Psoas muscle (tissue), 8 donors: ENCODE measurements at regions of chr22 and their contacts with region 1.

Region 1: DNA sequence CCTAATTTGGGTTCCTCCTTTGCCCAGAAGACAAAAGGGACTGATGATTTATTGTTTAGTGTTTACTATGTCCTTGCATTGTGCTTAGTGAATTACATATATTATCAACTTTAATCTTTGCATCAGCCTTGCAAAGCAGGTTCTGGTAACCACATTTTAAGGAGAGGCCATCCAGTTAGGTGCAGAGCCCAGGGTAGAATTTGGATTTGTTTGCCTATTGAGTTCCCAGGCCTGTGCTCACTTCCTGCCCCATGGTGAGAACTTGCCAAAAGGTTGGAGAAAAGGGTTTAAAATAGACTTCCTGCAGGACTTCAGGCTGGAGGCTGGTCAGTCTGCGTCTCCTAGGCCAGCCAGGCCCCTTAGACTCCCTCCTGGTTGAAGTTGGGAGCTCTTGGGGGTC is 72.0 kb downstream of the ATXN10 start:
- DNase-seq: no peak
- ATAC-seq: peak; percentile 42 to 71 (median 56)
- H3K4me3 ChIP-seq: no peak overlapping the region
- H3K27ac ChIP-seq: peak overlapping the region; percentile 74
- H3K4me1 ChIP-seq: peaks cover 19% of the 10 kb centered on the region
- H3K27me3 ChIP-seq: no peaks in the 10 kb centered on the region
- CTCF ChIP-seq: no peak

Region 2: GRCh38 chr22:45709060-45709739 is 34.5 kb before region 1 on chr22:
- intact Hi-C with region 1: no loop called
- DNase-seq: peak in 1 of 2 donors; percentile 23
- ATAC-seq: peak in 3 of 4 donors; percentile 28 to 50 (median 34)
- H3K4me3 ChIP-seq: no peak overlapping the region
- H3K27ac ChIP-seq: peak overlapping the region; percentile 57
- H3K4me1 ChIP-seq: peaks cover 27% of the 10 kb centered on the region
- H3K27me3 ChIP-seq: no peaks in the 10 kb centered on the region
- CTCF ChIP-seq: no peak

Region 3: GRCh38 chr22:45785458-45785857 is 41.8 kb after region 1 on chr22:
- intact Hi-C with region 1: loop called in 1 of 2 experiments (anchors 2 kb)
- DNase-seq: no peak
- ATAC-seq: peak; percentile 67 to 77 (median 74)
- H3K4me3 ChIP-seq: no peak overlapping the region
- H3K27ac ChIP-seq: no peak overlapping the region
- H3K4me1 ChIP-seq: peaks cover 25% of the 10 kb centered on the region
- H3K27me3 ChIP-seq: no peaks in the 10 kb centered on the region
- CTCF ChIP-seq: no peak

Region 4: DNA sequence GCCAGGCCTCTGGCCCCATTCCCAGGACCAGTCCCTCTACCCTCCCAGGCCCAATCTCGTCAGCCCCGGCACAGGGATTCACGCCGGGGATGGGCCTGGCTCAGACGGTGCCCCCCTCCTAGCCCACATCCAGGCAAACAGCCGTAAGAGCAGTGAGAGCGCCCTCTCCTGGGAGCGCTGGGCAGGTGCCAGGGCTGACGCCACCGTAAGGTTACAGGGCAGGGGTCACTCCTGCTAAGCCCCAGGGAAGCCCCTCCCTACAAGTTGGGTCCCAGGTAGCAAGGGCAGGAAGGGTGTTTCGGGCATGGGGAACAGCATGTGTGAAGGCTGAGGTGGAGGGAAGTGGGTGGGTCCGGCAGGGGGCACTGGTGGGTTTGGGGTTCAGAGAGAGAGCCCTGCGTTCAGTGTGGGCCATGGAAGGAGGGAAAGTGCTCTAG is 387.5 kb after region 1 on chr22:
- intact Hi-C with region 1: no loop called
- DNase-seq: peak in 1 of 2 donors; percentile 15
- ATAC-seq: no peak
- H3K4me3 ChIP-seq: no peak overlapping the region
- H3K27ac ChIP-seq: no peak overlapping the region
- H3K4me1 ChIP-seq: no peaks in the 10 kb centered on the region
- H3K27me3 ChIP-seq: no peaks in the 10 kb centered on the region
- CTCF ChIP-seq: no peak